Mammary epithelial cell (primary cell): ENCODE measurements at regions of chr22 and their contacts with region 1.

Region 1: GRCh38 chr22:39532215-39533071 is at the start of gene RPS19BP1:
- DNase-seq: peak; percentile 100
- H3K4me3 ChIP-seq: peak within 1 kb of the TSS; percentile 65 to 85 (median 80)
- H3K27ac ChIP-seq: peak within 1 kb of the TSS; percentile 52
- H3K4me1 ChIP-seq: peaks cover 41% of the 10 kb centered on the region
- H3K27me3 ChIP-seq: no peaks in the 10 kb centered on the region
- CTCF ChIP-seq: no peak
- total RNA-seq, gene RPS19BP1: 35.7 to 81.3 TPM

Region 2: DNA sequence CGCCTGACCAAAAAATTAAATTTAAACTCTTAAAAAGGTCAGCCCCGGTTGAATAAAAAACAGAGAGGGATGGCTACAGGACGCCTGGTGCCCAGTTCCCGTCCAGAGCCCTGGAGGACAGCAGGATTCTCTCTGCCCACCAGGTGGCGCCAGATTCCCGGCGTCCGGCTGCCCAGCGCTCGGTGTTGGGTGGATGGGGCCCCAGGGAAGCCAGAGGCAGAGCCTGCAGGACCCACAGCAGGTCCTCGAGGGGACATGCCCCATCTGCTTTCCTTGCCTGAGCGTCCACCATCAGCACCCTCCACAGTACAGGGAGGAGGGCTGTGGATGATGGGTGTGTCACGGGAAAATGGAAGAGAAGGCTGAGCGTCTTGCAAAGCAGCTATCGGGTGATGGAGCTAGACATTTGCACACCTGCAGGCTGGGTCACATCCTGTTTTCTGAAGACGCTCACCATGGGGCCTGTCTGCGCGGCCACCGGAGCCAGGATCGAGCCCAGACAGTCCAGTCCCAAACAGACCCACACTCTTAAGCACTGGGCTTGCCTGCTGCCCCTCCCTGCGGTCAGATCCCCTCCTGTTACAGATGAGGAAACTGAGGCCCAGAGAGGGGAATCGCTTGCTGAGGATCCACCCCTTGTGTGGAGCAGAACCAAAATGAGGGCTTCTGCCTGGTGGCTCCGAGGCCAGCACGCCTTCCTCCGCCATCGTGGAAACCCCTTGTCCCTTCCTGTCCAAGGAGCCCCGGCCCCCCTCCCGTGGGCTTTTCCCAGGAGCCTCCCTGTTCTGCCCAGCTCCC is 361.4 kb before region 1 on chr22:
- CTCF ChIA-PET with region 1: no interaction called
- dilution Hi-C with region 1: no loop called
- in situ Hi-C with region 1: no loop called
- intact Hi-C with region 1: loop called (anchors 2 kb)
- DNase-seq: peak; percentile 69
- H3K4me3 ChIP-seq: no peak overlapping the region
- H3K27ac ChIP-seq: no peak overlapping the region
- H3K4me1 ChIP-seq: peaks cover 31% of the 10 kb centered on the region
- H3K27me3 ChIP-seq: no peaks in the 10 kb centered on the region
- CTCF ChIP-seq: peak; percentile 70 to 94

Region 3: GRCh38 chr22:39462443-39463221 is 69.8 kb before region 1 on chr22:
- CTCF ChIA-PET with region 1: no interaction called
- dilution Hi-C with region 1: no loop called
- in situ Hi-C with region 1: no loop called
- intact Hi-C with region 1: no loop called
- DNase-seq: no peak
- H3K4me3 ChIP-seq: no peak overlapping the region
- H3K27ac ChIP-seq: no peak overlapping the region
- H3K4me1 ChIP-seq: no peaks in the 10 kb centered on the region
- H3K27me3 ChIP-seq: peaks cover 12% of the 10 kb centered on the region
- CTCF ChIP-seq: no peak

Region 4: GRCh38 chr22:39493231-39493673 is 39.2 kb before region 1 on chr22:
- CTCF ChIA-PET with region 1: no interaction called
- dilution Hi-C with region 1: no loop called
- in situ Hi-C with region 1: no loop called
- intact Hi-C with region 1: loop called (anchors 1 kb)
- DNase-seq: peak; percentile 26
- H3K4me3 ChIP-seq: no peak overlapping the region
- H3K27ac ChIP-seq: no peak overlapping the region
- H3K4me1 ChIP-seq: no peaks in the 10 kb centered on the region
- H3K27me3 ChIP-seq: no peaks in the 10 kb centered on the region
- CTCF ChIP-seq: peak; percentile 39 to 60

Region 5: DNA sequence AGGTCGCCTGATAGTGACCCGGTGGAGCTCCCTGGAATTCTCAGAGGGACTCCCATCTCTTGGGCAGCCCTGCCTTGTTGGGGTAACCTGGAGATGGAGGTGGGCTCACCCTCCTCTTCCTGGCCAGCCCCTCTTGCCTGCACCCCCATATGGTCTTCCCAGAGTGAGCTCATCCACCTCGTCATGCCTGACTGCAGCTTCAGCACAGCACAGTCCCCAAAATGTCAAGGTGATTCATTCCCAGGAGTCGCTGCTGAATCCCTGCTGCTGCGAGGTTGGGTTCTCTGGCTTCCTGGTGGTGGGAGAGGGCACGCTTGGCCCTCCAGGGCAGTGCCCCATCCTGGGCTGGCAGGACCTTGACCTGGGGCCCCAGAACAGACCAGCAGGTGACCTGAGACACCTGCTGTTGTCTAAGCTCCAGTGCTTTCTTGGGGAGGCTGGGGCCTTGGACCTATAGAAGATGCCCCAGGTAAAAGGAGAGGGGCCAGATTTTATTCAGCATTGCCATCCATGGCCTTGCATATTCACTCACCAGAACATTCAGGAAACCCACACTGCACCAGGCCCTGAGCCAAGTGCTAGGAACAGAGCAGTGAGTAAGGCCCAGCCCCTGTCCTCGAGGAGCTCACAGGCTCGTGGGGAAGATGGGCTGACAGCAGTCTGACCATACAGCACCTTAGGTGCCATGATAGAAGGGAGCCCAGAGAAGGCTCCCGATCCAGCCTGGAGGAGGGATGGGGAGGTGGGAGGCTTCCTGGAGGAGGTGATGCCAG is 111.1 kb after region 1 on chr22:
- CTCF ChIA-PET with region 1: no interaction called
- dilution Hi-C with region 1: no loop called
- in situ Hi-C with region 1: no loop called
- intact Hi-C with region 1: no loop called
- DNase-seq: no peak
- H3K4me3 ChIP-seq: no peak overlapping the region
- H3K27ac ChIP-seq: no peak overlapping the region
- H3K4me1 ChIP-seq: no peaks in the 10 kb centered on the region
- H3K27me3 ChIP-seq: no peaks in the 10 kb centered on the region
- CTCF ChIP-seq: no peak

Region 6: DNA sequence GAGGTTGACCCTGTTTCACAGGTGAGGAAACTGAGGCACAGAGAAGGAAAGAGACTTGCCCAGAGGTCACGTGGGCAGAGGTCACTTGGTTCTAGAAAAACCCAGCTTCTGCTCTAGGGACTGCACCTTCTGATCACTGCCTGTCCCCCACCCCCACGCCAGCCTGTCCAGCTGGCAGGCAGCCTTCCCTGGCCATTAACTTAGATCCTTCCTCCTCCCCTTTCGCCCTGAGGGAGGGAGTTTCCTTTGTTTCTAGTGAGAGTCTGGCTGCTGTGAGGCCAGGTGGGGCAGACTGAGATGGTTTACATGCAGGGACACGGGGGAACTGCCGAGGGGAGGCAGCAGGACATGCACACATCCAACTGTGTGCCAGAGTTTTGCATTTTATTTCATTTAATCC is 465.5 kb after region 1 on chr22:
- CTCF ChIA-PET with region 1: interaction called, 3 read pairs
- dilution Hi-C with region 1: no loop called
- in situ Hi-C with region 1: no loop called
- intact Hi-C with region 1: loop called (anchors 5 kb)
- DNase-seq: peak; percentile 93
- H3K4me3 ChIP-seq: peak overlapping the region; percentile 4 to 90 (median 6)
- H3K27ac ChIP-seq: peak overlapping the region; percentile 60
- H3K4me1 ChIP-seq: peaks cover 71% of the 10 kb centered on the region
- H3K27me3 ChIP-seq: no peaks in the 10 kb centered on the region
- CTCF ChIP-seq: no peak

Region 7: GRCh38 chr22:40177738-40178416 is 645.4 kb after region 1 on chr22 and contains the start of gene TNRC6B:
- CTCF ChIA-PET with region 1: no interaction called
- dilution Hi-C with region 1: no loop called
- in situ Hi-C with region 1: loop called in 1 of 2 experiments (anchors 25 kb)
- intact Hi-C with region 1: no loop called
- DNase-seq: peak; percentile 97
- H3K4me3 ChIP-seq: peak within 1 kb of the TSS; percentile 53 to 100 (median 100)
- H3K27ac ChIP-seq: peak within 1 kb of the TSS; percentile 90
- H3K4me1 ChIP-seq: peaks cover 26% of the 10 kb centered on the region
- H3K27me3 ChIP-seq: no peaks in the 10 kb centered on the region
- CTCF ChIP-seq: no peak
- total RNA-seq, gene TNRC6B: 25.2 to 27.3 TPM

Region 8: GRCh38 chr22:40363059-40363458 is 830.6 kb after region 1 on chr22:
- CTCF ChIA-PET with region 1: interaction called, 3 read pairs
- dilution Hi-C with region 1: no loop called
- in situ Hi-C with region 1: loop called in 1 of 2 experiments (anchors 10 kb)
- intact Hi-C with region 1: no loop called
- DNase-seq: no peak
- H3K4me3 ChIP-seq: no peak overlapping the region
- H3K27ac ChIP-seq: no peak overlapping the region
- H3K4me1 ChIP-seq: no peaks in the 10 kb centered on the region
- H3K27me3 ChIP-seq: no peaks in the 10 kb centered on the region
- CTCF ChIP-seq: no peak